HepG2 (cell line): ENCODE measurements at regions of chr2 and their contacts with region 1.

Region 1: GRCh38 chr2:160635488-160635887 is 141.9 kb upstream of the RBMS1 start:
- DNase-seq: no peak
- ATAC-seq: no peak
- H3K4me3 ChIP-seq: no peak overlapping the region
- H3K27ac ChIP-seq: no peak overlapping the region
- H3K4me1 ChIP-seq: no peaks in the 10 kb centered on the region
- H3K27me3 ChIP-seq: peaks cover 0 to 1% of the 10 kb centered on the region in 2 experiments; a peak in 2 of 5 replicates
- CTCF ChIP-seq: no peak
- EP300 ChIP-seq: no peak
- POLR2A ChIP-seq: no peak
- RAD21 ChIP-seq: no peak

Region 2: DNA sequence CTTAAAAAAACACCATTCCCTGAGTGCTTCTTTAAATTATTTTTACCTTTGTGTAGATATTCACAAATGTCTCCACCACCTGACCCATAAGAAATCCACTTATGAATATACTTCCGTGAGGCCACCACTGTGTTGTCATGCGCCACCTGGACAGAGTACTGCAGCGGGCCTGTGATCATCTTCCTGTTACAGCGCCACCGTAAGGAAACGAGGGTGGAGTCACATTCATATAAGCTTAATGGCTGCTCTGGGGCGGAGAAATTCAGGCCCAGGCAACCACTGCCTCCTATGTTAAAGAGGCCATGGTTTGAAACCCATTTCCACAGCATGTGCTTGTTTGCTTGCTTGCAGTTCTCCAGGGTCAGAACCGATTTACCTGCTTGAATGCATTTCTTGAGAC is 590.8 kb before region 1 on chr2:
- CTCF ChIA-PET with region 1: no interaction called
- POLR2A ChIA-PET with region 1: no interaction called
- in situ Hi-C with region 1: no loop called
- intact Hi-C with region 1: loop called (anchors 5 kb)
- DNase-seq: no peak
- ATAC-seq: no peak
- H3K4me3 ChIP-seq: no peak overlapping the region
- H3K27ac ChIP-seq: no peak overlapping the region
- H3K4me1 ChIP-seq: no peaks in the 10 kb centered on the region
- H3K27me3 ChIP-seq: peaks cover 0 to 24% of the 10 kb centered on the region in 2 experiments; a peak in 2 of 5 replicates
- CTCF ChIP-seq: no peak
- EP300 ChIP-seq: no peak
- POLR2A ChIP-seq: no peak
- RAD21 ChIP-seq: no peak

Region 3: DNA sequence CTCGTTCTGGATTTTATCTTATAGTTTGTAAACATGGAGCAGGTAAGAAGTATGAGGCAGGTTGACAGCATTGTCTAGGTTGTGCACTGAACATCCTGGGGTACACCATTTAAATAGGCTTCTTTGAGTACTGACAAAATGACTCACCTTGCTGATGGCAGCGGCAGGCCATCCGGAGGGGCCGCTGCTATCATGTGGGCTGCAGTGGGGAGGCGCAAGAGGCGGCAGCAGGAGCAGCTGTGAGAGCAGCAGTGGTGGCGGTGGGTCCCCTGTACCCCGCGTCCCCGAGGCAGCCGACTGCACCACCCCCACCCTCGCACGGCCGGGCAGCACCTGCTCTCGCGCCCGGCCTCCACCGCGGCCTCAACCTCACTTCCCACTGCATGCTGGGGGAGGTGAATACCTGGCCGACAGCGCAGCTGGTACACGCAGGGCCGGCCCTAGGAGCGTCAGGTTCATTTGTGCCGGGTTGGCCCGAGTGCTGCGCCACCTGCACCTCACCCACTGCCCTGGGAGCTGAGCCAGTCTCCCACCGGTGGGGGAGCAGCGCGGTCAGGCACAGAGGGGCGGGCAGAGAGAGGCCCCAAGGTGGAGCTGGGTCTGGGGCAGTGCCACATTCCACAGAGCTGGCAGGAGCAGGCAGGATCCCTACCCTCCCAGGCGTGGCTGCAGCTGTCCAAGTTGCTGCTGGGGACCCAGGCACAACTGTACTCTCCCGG is 12.6 kb after region 1 on chr2:
- CTCF ChIA-PET with region 1: no interaction called
- POLR2A ChIA-PET with region 1: no interaction called
- in situ Hi-C with region 1: no loop called
- intact Hi-C with region 1: no loop called
- DNase-seq: no peak
- ATAC-seq: peak; percentile 48; the same call in 2 of the 3 replicates
- H3K4me3 ChIP-seq: no peak overlapping the region
- H3K27ac ChIP-seq: no peak overlapping the region
- H3K4me1 ChIP-seq: no peaks in the 10 kb centered on the region
- H3K27me3 ChIP-seq: no peaks in the 10 kb centered on the region
- CTCF ChIP-seq: no peak
- EP300 ChIP-seq: no peak
- POLR2A ChIP-seq: no peak
- RAD21 ChIP-seq: no peak

Region 4: GRCh38 chr2:160918906-160919503 is 283.5 kb after region 1 on chr2:
- CTCF ChIA-PET with region 1: no interaction called
- POLR2A ChIA-PET with region 1: no interaction called
- in situ Hi-C with region 1: no loop called
- intact Hi-C with region 1: no loop called
- DNase-seq: peak; percentile 37
- ATAC-seq: peak; percentile 98
- H3K4me3 ChIP-seq: no peak overlapping the region
- H3K27ac ChIP-seq: no peak overlapping the region
- H3K4me1 ChIP-seq: no peaks in the 10 kb centered on the region
- H3K27me3 ChIP-seq: no peaks in the 10 kb centered on the region
- CTCF ChIP-seq: peak; percentile 74
- EP300 ChIP-seq: no peak
- POLR2A ChIP-seq: no peak
- RAD21 ChIP-seq: peak; percentile 48; the same call in 1 of the 2 replicates

Region 5: DNA sequence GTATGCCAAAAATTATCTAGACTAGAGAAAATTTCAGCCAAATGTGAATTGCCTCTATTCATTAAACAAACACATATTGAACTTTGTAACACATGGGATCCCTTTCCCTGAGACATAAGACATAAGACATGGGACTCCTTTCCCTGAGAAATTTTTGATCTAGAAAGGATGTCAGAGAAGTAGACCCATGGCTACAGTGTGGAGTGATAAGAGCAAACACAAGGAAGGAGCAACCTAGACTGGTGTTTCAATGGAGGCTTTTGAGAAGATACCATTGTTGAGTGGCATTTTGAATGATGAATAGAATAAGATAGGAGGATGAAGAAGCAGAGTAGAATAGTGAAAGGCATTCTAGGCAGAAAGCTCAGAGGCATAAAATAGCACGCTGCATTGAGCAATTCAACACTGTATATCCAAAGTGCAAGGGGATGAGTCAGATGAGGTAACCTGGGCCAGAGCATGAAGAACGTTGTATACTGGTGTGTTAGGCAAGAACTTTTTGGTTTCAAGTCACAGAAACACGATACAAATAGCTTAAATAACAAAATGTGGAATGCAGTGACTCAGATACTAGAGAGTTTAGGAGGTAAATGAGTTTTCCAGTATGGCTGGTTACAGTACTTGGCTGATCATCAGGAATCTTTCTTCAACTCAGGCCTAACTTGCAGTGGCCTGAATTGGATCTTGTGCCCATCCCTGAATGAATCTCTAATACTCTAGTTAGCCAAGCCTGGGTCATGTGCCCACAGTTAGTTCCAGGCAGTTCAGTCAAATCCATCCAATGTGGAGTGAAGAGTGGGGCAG is 395.0 kb after region 1 on chr2:
- CTCF ChIA-PET with region 1: no interaction called
- POLR2A ChIA-PET with region 1: no interaction called
- in situ Hi-C with region 1: no loop called
- intact Hi-C with region 1: no loop called
- DNase-seq: peak; percentile 45
- ATAC-seq: peak; percentile 98
- H3K4me3 ChIP-seq: no peak overlapping the region
- H3K27ac ChIP-seq: no peak overlapping the region
- H3K4me1 ChIP-seq: no peaks in the 10 kb centered on the region
- H3K27me3 ChIP-seq: no peaks in the 10 kb centered on the region
- CTCF ChIP-seq: no peak
- EP300 ChIP-seq: no peak
- POLR2A ChIP-seq: no peak
- RAD21 ChIP-seq: no peak